ENCODE measurements at regions of chr17 and their contacts with region 1.

Region 1: DNA sequence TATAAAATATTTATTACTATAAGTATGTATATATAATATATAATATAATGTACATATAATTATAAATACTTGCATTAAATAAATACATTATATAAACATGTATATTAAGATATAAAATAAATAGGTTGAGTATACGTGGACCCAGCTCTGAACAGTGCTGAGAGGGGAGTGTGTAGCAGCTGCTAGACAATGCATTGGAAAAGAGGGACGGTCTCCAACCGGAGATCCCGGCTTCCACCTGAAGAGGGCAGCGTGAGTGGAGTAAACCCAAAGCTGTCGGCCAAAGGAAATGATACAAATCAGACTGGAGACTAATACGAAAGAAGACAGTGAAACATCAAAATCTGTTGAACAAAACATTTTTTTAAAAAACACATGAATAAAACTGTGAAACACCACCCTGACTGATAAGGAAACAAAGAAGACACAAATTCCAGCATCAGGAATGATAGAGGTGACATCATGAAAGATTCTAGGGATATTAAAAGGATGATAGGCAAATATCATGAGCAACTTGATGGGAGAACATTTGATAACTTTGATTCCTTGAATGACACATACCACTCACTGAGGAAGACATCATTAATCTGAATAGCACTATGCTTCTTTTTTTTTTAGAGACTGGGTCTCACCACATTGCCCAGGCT is 125.4 kb upstream of the CHMP6 start:
- DNase-seq: peak; percentile 86
- H3K4me3 Mint-ChIP-seq: no peak overlapping the region
- H3K27ac Mint-ChIP-seq: peak overlapping the region; percentile 80
- H3K4me1 Mint-ChIP-seq: peaks cover 76% of the 10 kb centered on the region
- H3K27me3 Mint-ChIP-seq: no peaks in the 10 kb centered on the region

Region 2: DNA sequence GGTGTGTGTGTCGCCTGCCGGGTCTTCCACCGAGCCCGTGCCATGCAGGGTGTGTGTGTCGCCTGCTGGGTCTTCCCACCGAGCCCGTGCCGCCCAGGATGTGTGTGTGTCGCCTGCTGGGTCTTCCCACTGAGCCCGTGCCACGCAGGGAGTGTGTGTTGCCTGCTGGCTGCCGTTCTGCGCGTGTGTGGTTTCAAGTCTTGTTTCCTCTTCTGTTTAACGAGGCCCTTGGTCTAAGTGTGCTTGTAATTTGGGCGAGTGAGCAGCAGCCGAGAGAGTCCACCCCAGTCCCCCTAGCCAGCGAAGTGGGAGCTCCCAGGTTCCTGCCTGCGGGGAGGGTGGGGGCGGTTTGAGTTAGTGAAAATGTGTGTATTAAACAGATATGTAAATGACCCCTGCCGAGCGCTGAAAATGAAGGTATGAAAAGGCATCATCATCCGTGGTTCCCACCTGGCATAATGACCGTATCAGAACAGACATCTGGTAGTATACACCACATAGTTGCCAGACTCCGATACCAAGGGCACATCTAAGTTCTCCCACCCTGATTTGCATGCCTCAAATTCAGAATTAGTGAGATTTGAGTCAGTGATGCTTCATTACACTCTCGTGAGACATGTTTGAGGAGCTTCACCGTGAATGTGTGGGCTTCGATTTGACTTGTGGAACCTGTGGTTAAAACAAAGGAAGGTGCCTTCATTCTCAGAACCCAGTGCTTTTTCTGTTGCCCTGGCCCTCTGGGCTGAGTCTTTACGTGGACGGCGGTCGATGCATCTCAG is 10.9 kb after region 1 on chr17:
- CTCF ChIA-PET with region 1: interaction called, 7 read pairs
- POLR2A ChIA-PET with region 1: no interaction called
- intact Hi-C with region 1: loop called (anchors 1 kb)
- DNase-seq: peak; percentile 89
- H3K4me3 Mint-ChIP-seq: peak overlapping the region; percentile 70
- H3K27ac Mint-ChIP-seq: peak overlapping the region; percentile 98
- H3K4me1 Mint-ChIP-seq: peaks cover 49% of the 10 kb centered on the region
- H3K27me3 Mint-ChIP-seq: no peaks in the 10 kb centered on the region